ENCODE measurements at regions of chr1 and their contacts with region 1.

Region 1: GRCh38 chr1:22704440-22705067 is 6.1 kb upstream of the EPHB2 start:
- DNase-seq: peak; percentile 24
- H3K4me3 ChIP-seq: no peak overlapping the region
- CTCF ChIP-seq: peak; percentile 88

Region 2: GRCh38 chr1:22673486-22674409 is 30.8 kb before region 1 on chr1:
- CTCF ChIA-PET with region 1: interaction called, 64 read pairs
- POLR2A ChIA-PET with region 1: no interaction called
- DNase-seq: peak; percentile 7
- H3K4me3 ChIP-seq: no peak overlapping the region
- CTCF ChIP-seq: peak; percentile 75

Region 3: DNA sequence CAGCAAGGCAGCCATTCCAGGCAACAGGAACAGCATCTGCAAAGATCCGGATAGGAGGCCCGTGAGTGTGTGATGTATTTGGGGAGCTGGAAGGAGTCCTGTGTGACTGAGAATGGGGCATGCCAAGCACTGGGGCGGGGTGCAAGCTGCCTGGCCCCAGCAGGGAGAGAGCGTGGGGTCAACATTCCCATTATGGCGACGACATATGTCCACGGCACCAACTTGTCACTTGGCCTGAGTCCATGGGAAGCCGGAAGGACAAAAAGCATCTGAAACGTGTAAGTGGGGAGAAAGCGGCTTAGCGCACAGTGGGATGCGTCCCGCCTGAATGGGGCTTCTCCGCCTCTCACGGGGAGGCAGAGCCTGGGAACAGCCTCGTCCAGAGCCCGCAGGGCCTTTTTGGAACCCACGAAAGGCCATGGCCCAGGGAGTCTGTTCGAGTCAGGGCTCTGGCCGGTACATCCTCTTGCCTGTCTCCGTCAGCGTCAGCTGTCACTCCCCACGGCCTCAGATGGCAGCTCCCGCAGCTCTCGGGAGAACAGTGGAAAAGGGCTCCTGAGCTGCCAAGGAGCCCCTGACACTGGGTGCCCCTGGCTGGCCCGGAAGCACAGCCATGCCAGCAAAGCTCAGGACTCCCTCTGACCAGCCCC is 18.5 kb after region 1 on chr1:
- CTCF ChIA-PET with region 1: interaction called, 44 read pairs
- POLR2A ChIA-PET with region 1: no interaction called
- DNase-seq: no peak
- H3K4me3 ChIP-seq: no peak overlapping the region
- CTCF ChIP-seq: no peak

Region 4: DNA sequence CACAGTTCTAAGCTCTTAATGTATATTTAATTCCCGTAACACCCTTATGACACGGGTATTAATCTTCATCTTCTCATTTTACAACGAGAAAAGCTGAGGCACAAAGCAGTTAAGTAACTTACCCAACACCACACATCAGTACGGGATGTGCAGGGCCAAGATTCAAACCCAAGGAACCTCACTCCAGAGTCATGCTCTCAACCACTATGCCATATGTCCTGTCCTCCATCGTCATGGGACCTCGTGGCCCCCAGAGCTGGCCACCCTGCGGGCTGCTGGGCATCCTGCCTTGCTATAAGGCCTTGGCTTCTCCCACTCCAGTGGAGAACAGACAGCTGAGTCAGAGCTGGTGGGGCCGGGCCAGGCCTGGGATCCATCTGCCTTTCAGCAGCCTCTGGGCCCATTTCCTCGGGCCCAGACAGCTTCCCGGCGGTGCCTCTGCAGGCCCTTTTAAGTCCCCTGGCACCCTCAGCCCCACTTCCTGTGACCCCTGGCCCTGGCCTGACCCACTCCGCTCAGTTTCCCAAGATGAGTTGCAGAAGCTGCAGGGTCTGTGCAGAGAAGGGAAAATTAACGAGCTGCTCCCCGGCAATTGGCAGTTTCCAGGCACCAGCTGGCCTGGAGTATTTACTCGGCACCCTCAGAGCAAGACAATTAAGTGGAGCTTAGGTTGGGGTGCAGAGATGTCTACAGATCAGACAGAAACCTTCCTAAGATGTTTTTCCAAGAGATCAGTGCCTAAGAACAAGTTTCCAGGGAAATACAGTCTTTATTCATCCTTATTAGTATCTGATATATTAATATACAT is 104.3 kb after region 1 on chr1:
- CTCF ChIA-PET with region 1: interaction called, 34 read pairs
- POLR2A ChIA-PET with region 1: no interaction called
- DNase-seq: no peak
- H3K4me3 ChIP-seq: no peak overlapping the region
- CTCF ChIP-seq: no peak

Region 5: DNA sequence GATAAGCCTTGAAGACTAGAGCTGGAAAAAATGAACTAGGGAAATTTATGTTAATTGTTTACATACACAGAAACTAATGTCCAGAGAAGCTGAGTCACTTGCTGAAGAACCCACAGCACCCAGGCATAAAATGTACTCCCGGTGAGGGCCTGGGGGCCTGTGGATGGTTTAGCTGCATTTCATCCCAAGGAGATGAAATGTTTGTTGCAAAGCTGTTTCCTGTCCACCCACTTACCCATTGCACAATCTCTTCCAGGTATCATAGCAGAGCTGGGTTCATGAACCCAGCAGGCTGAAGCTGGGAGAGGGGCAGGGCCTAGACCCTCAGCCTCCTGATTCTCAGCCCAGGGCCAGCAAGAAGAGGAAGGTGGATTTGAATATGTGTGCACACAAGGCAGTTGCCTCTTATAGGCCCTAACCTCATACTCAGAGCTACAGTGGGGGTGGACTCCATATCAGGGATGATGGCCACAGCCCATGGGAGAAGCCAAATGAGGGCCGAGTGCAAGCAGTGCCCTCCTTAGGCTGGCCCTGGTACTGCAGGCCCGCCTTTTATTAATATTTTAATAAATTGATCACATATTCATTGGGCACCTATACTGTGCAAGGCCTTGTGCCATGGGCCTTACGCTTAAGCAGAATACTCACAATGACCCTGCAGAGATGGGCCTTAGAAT is 157.3 kb after region 1 on chr1:
- CTCF ChIA-PET with region 1: interaction called, 217 read pairs
- POLR2A ChIA-PET with region 1: no interaction called
- DNase-seq: peak; percentile 28
- H3K4me3 ChIP-seq: no peak overlapping the region
- CTCF ChIP-seq: peak; percentile 78

Region 6: DNA sequence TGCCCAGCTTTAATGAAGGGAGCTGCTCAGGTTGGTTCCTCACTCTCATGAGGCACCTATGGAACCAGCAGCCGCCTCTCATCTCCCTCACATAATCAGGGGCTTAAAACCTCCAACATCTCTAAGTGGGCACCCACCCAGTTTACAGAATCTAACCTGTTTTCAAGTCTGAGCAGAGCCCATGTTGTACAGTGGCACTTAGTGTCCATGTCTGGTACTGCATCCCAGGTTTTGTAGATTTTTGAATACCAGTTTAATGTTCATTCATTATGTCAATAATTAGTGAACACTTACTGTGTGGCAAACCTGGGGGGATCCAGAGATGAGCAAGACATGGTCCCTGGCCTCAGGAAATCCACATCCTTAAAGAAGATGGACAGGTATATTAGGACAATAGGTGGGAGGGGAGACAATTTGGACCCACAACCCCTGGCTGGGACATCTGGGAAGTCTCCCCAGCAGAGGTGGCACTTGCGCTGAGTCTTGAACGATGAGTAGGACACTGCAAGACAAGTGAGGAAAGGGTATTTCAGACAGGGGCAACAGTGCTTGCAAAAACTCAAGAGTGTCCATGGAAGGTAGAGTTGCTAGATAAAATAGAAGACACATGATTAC is 184.8 kb after region 1 on chr1:
- CTCF ChIA-PET with region 1: interaction called, 144 read pairs
- POLR2A ChIA-PET with region 1: no interaction called
- DNase-seq: no peak
- H3K4me3 ChIP-seq: no peak overlapping the region
- CTCF ChIP-seq: peak; percentile 71

Region 7: DNA sequence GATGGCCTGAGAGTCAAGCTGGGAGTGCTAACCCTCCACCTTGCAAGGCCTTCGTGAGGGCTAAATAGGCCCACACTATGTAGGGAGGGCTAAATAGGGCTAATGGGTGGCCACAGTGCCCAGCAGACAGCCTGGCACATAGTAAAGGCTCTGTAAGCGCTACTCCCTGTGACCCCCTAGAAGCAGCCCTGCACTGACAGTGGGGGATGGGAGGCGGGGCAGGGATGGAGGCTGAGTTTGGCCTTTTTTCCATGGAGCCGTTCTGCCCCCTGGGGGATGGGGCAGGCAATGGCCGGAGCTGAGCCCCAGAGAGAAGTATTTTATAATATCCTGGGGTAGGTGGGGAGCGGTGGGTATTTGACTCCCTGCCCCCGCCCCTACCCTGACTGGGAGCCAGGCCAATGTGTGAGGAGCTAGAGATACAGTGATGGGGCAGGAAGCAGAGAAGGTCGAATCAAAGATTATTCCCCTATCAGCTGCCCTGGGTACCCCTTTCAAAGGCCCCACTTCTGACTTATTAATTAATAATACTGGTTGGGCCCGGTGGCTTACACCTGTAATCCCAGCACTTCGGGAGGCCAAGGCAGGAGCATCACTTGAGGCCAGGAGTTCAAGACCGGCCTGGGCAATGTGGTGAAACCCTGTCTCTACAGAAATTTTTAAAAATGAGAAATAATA is 225.8 kb after region 1 on chr1:
- CTCF ChIA-PET with region 1: interaction called, 128 read pairs
- POLR2A ChIA-PET with region 1: no interaction called
- DNase-seq: no peak
- H3K4me3 ChIP-seq: no peak overlapping the region
- CTCF ChIP-seq: peak; percentile 81

Measured in AG04449 (cell line).